A673 (cell line): ENCODE measurements at regions of chr13 and their contacts with region 1.

Region 1: GRCh38 chr13:86098511-86098910 is 299.3 kb upstream of the SLITRK6 start:
- DNase-seq: no peak
- H3K4me3 ChIP-seq: no peak overlapping the region
- H3K27ac ChIP-seq: no peak overlapping the region
- H3K4me1 ChIP-seq: no peaks in the 10 kb centered on the region
- H3K27me3 ChIP-seq: no peaks in the 10 kb centered on the region
- CTCF ChIP-seq: no peak

Region 2: GRCh38 chr13:86725105-86725504 is 626.6 kb after region 1 on chr13:
- CTCF ChIA-PET with region 1: no interaction called
- POLR2A ChIA-PET with region 1: no interaction called
- intact Hi-C with region 1: loop called (anchors 10 kb)
- DNase-seq: peak; percentile 1
- H3K4me3 ChIP-seq: no peak overlapping the region
- H3K27ac ChIP-seq: no peak overlapping the region
- H3K4me1 ChIP-seq: no peaks in the 10 kb centered on the region
- H3K27me3 ChIP-seq: no peaks in the 10 kb centered on the region
- CTCF ChIP-seq: 0 out of 2 replicates have a peak, but pooled peaks have one; percentile 20